OCI-LY7 (cell line): ENCODE measurements at regions of chr22 and their contacts with region 1.

Region 1: GRCh38 chr22:34620832-34621231 is 445.1 kb upstream of the ISX start:
- DNase-seq: no peak
- H3K4me3 ChIP-seq: no peak overlapping the region
- H3K27ac ChIP-seq: no peak overlapping the region
- H3K4me1 ChIP-seq: no peaks in the 10 kb centered on the region
- CTCF ChIP-seq: no peak

Region 2: DNA sequence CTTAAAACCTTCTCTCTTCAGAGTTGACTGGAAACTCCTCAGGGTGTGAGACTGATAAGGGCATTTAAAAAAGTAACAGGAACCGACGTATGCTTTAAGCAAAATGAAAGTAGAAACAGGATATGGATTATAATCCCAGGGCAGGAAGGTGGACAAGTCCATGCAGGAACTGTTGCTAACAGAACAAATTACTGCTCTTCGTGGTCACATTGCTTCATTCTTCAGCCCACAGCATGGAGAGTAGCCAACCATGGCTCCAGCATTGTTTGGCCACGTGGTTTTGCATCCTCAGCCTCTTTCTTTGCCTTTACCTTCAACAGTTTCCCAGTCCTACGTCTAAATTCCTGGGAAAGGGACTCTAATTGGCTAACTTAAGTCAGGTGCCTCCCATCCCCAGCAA is 118.0 kb before region 1 on chr22:
- CTCF ChIA-PET with region 1: no interaction called
- POLR2A ChIA-PET with region 1: interaction called, 10 read pairs
- intact Hi-C with region 1: no loop called
- DNase-seq: no peak
- H3K4me3 ChIP-seq: no peak overlapping the region
- H3K27ac ChIP-seq: no peak overlapping the region
- H3K4me1 ChIP-seq: no peaks in the 10 kb centered on the region
- CTCF ChIP-seq: no peak

Region 3: DNA sequence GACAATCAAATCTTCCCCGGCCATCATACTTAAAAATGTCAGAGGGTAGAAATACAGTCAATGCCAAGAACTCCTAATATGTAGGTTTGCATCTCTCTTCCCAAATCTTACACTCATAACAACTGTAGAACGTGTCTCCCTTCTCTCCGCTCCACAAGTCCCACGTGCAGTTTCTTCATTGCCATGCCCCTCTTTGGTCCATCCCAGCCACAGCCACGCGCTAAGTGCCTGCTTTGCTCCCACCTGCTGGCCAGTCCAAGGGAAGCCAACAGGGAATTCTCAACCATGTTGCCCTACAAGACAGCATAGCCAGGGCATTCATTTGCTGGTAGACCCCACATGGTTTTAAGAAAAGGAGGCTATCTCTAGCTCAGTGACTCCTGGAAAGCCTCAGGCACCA is 24.5 kb after region 1 on chr22:
- CTCF ChIA-PET with region 1: no interaction called
- POLR2A ChIA-PET with region 1: no interaction called
- intact Hi-C with region 1: no loop called
- DNase-seq: no peak
- H3K4me3 ChIP-seq: no peak overlapping the region
- H3K27ac ChIP-seq: no peak overlapping the region
- H3K4me1 ChIP-seq: no peaks in the 10 kb centered on the region
- CTCF ChIP-seq: no peak